CD8-positive, alpha-beta T cell (primary cell): ENCODE measurements at regions of chr12 and their contacts with region 1.

Region 1: DNA sequence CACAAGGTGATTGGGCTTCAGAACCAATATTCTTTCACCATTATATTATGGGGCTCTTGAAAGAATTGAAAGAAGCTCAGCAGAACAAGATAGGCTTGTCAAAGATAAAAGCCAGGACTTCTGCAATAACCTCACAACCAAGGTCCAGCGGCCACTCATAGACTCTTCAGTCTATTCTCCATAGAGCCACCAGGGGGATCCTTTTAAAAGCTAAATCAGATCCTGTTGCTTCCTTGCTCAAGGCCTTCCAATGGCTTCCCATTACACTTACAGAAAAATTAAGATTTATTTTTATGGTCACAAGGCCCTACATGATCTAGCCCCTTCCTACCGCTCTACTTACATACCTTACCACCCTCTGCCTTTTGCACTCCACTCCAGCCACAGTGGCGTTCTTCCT is 169.6 kb downstream of the C12orf42 start:
- DNase-seq: peak in 1 of 9 experiments; percentile 11
- ATAC-seq: no peak
- H3K4me3 ChIP-seq: no peak overlapping the region
- H3K4me3 Mint-ChIP-seq: no peak overlapping the region
- H3K27ac ChIP-seq: no peak overlapping the region
- H3K27ac Mint-ChIP-seq: no peak overlapping the region
- H3K4me1 ChIP-seq: no peaks in the 10 kb centered on the region
- H3K4me1 Mint-ChIP-seq: no peaks in the 10 kb centered on the region
- H3K27me3 ChIP-seq: no peaks in the 10 kb centered on the region
- H3K27me3 Mint-ChIP-seq: no peaks in the 10 kb centered on the region
- CTCF ChIP-seq: no peak

Region 2: DNA sequence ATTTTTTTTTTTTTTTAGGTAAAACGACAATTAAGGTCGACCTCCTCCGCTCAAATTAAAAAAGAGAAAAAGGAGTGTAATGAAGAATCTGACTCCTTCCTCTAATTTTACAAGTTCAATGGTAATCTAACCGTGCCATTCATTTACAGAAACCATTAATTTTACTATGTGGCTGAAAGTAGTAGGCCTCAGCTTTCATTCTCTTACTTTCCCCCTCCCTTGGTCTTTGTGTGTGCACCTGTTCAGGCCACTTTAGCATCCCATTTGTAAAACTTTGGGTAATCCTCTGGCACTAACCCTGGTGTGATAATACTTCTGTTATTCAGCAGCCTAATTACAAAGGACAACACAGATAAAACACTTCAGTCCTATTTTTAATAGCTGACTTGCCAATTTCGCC is 240.6 kb before region 1 on chr12:
- CTCF ChIA-PET with region 1: no interaction called
- POLR2A ChIA-PET with region 1: no interaction called
- intact Hi-C with region 1: loop called in 1 of 2 experiments (anchors 10 kb)
- DNase-seq: no peak
- ATAC-seq: no peak
- H3K4me3 ChIP-seq: no peak overlapping the region
- H3K4me3 Mint-ChIP-seq: no peak overlapping the region
- H3K27ac ChIP-seq: no peak overlapping the region
- H3K27ac Mint-ChIP-seq: no peak overlapping the region
- H3K4me1 ChIP-seq: no peaks in the 10 kb centered on the region
- H3K4me1 Mint-ChIP-seq: no peaks in the 10 kb centered on the region
- H3K27me3 ChIP-seq: no peaks in the 10 kb centered on the region
- H3K27me3 Mint-ChIP-seq: no peaks in the 10 kb centered on the region
- CTCF ChIP-seq: no peak

Region 3: GRCh38 chr12:103301642-103302591 is 24.3 kb before region 1 on chr12:
- CTCF ChIA-PET with region 1: interaction called, 3 read pairs
- POLR2A ChIA-PET with region 1: no interaction called
- intact Hi-C with region 1: loop called in 1 of 2 experiments (anchors 1 kb)
- DNase-seq: no peak
- ATAC-seq: no peak
- H3K4me3 ChIP-seq: no peak overlapping the region
- H3K4me3 Mint-ChIP-seq: no peak overlapping the region
- H3K27ac ChIP-seq: no peak overlapping the region
- H3K27ac Mint-ChIP-seq: no peak overlapping the region
- H3K4me1 ChIP-seq: no peaks in the 10 kb centered on the region
- H3K4me1 Mint-ChIP-seq: peaks cover 2% of the 10 kb centered on the region
- H3K27me3 ChIP-seq: peaks cover 0 to 3% of the 10 kb centered on the region in 2 experiments
- H3K27me3 Mint-ChIP-seq: no peaks in the 10 kb centered on the region
- CTCF ChIP-seq: no peak

Region 4: GRCh38 chr12:103348935-103349334 is 22.7 kb after region 1 on chr12:
- CTCF ChIA-PET with region 1: no interaction called
- POLR2A ChIA-PET with region 1: no interaction called
- intact Hi-C with region 1: no loop called
- DNase-seq: peak in 1 of 9 experiments; percentile 5
- ATAC-seq: no peak
- H3K4me3 ChIP-seq: no peak overlapping the region
- H3K4me3 Mint-ChIP-seq: no peak overlapping the region
- H3K27ac ChIP-seq: no peak overlapping the region
- H3K27ac Mint-ChIP-seq: peak overlapping the region; percentile 46
- H3K4me1 ChIP-seq: no peaks in the 10 kb centered on the region
- H3K4me1 Mint-ChIP-seq: peaks cover 10% of the 10 kb centered on the region
- H3K27me3 ChIP-seq: no peaks in the 10 kb centered on the region
- H3K27me3 Mint-ChIP-seq: no peaks in the 10 kb centered on the region
- CTCF ChIP-seq: no peak

Region 5: DNA sequence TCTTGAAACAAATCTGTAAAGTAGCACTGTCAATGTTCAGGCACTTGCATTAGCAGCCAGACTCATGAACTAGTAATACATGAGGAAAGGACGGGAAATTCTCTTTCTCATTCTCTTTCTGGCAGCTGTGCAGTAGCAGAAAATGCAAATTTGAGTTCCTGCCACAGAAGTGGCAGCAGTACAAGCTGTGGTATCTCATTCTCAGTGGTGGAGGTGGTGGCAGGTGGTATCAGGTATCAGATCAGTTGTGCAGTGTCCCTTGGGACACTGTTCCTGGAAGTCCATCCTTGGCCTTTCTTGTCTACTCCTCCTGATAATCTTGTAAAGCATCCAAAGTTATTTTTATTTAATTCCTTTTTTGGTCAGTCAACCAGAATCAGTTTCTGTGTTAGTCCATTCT is 66.5 kb after region 1 on chr12:
- CTCF ChIA-PET with region 1: no interaction called
- POLR2A ChIA-PET with region 1: no interaction called
- intact Hi-C with region 1: no loop called
- DNase-seq: no peak
- ATAC-seq: no peak
- H3K4me3 ChIP-seq: no peak overlapping the region
- H3K4me3 Mint-ChIP-seq: no peak overlapping the region
- H3K27ac ChIP-seq: no peak overlapping the region
- H3K27ac Mint-ChIP-seq: no peak overlapping the region
- H3K4me1 ChIP-seq: no peaks in the 10 kb centered on the region
- H3K4me1 Mint-ChIP-seq: no peaks in the 10 kb centered on the region
- H3K27me3 ChIP-seq: no peaks in the 10 kb centered on the region
- H3K27me3 Mint-ChIP-seq: no peaks in the 10 kb centered on the region
- CTCF ChIP-seq: no peak

Region 6: GRCh38 chr12:103513875-103514274 is 187.7 kb after region 1 on chr12:
- CTCF ChIA-PET with region 1: no interaction called
- POLR2A ChIA-PET with region 1: no interaction called
- intact Hi-C with region 1: no loop called
- DNase-seq: no peak
- ATAC-seq: no peak
- H3K4me3 ChIP-seq: no peak overlapping the region
- H3K4me3 Mint-ChIP-seq: no peak overlapping the region
- H3K27ac ChIP-seq: no peak overlapping the region
- H3K27ac Mint-ChIP-seq: no peak overlapping the region
- H3K4me1 ChIP-seq: no peaks in the 10 kb centered on the region
- H3K4me1 Mint-ChIP-seq: no peaks in the 10 kb centered on the region
- H3K27me3 ChIP-seq: no peaks in the 10 kb centered on the region
- H3K27me3 Mint-ChIP-seq: no peaks in the 10 kb centered on the region
- CTCF ChIP-seq: no peak